MCF 10A (cell line): ENCODE measurements at regions of chr12 and their contacts with region 1.

Region 1: GRCh38 chr12:14769969-14770495 is 33.2 kb downstream of the WBP11 start:
- DNase-seq: peak; percentile 81
- H3K4me3 Mint-ChIP-seq: peak overlapping the region; percentile 98
- H3K27ac Mint-ChIP-seq: peak overlapping the region; percentile 98
- H3K4me1 Mint-ChIP-seq: peaks cover 11% of the 10 kb centered on the region
- H3K27me3 Mint-ChIP-seq: no peaks in the 10 kb centered on the region
- CTCF ChIP-seq: peak; percentile 62

Region 2: GRCh38 chr12:14403711-14404196 is 366.3 kb before region 1 on chr12:
- CTCF ChIA-PET with region 1: no interaction called
- POLR2A ChIA-PET with region 1: interaction called, 3 read pairs
- intact Hi-C with region 1: loop called (anchors 10 kb)
- DNase-seq: peak; percentile 69
- H3K4me3 Mint-ChIP-seq: peak overlapping the region; percentile 28
- H3K27ac Mint-ChIP-seq: peak overlapping the region; percentile 91
- H3K4me1 Mint-ChIP-seq: peaks cover 27% of the 10 kb centered on the region
- H3K27me3 Mint-ChIP-seq: no peaks in the 10 kb centered on the region
- CTCF ChIP-seq: no peak

Region 3: GRCh38 chr12:14521822-14522221 is 248.2 kb before region 1 on chr12:
- CTCF ChIA-PET with region 1: no interaction called
- POLR2A ChIA-PET with region 1: no interaction called
- intact Hi-C with region 1: no loop called
- DNase-seq: no peak
- H3K4me3 Mint-ChIP-seq: no peak overlapping the region
- H3K27ac Mint-ChIP-seq: no peak overlapping the region
- H3K4me1 Mint-ChIP-seq: no peaks in the 10 kb centered on the region
- H3K27me3 Mint-ChIP-seq: no peaks in the 10 kb centered on the region
- CTCF ChIP-seq: no peak

Region 4: DNA sequence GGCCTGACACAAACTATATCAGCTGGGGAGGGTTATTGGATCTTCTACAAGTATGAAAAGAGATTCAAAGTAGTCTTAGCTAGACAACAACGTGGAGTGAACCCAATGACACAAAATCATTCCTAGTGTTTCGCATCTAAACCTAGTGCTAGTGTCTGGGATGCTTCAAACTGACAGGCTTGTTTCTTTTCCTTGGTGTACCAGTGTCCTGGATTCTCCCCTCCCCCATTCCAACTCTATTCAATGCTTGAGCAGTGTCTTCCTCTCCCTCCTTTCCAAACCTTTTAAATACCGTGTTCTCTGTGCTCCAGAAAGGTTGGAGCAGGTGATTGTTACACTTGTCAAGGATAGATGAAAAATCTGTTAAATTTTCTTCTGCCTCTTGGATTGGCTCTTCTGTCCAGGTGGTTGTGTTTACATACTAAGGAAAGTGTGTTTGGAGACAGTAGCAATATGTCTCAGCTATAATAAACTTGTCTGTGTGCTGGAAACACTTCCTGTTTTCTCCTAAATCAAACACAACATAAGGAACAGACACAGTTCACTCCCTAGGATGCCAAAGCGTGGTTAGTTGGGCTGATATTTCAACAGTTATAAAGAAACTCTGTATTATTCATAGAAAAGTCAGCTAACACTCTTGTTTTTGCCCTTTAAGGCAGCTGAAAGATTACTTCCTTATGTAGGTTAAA is 59.3 kb before region 1 on chr12:
- CTCF ChIA-PET with region 1: no interaction called
- POLR2A ChIA-PET with region 1: no interaction called
- intact Hi-C with region 1: no loop called
- DNase-seq: no peak
- H3K4me3 Mint-ChIP-seq: no peak overlapping the region
- H3K27ac Mint-ChIP-seq: no peak overlapping the region
- H3K4me1 Mint-ChIP-seq: no peaks in the 10 kb centered on the region
- H3K27me3 Mint-ChIP-seq: no peaks in the 10 kb centered on the region
- CTCF ChIP-seq: no peak

Region 5: GRCh38 chr12:14782756-14783155 is 12.7 kb after region 1 on chr12:
- CTCF ChIA-PET with region 1: interaction called, 7 read pairs
- POLR2A ChIA-PET with region 1: interaction called, 25 read pairs
- intact Hi-C with region 1: no loop called
- DNase-seq: no peak
- H3K4me3 Mint-ChIP-seq: no peak overlapping the region
- H3K27ac Mint-ChIP-seq: no peak overlapping the region
- H3K4me1 Mint-ChIP-seq: no peaks in the 10 kb centered on the region
- H3K27me3 Mint-ChIP-seq: no peaks in the 10 kb centered on the region
- CTCF ChIP-seq: no peak

Region 6: GRCh38 chr12:14810953-14811483 is 41.0 kb after region 1 on chr12:
- CTCF ChIA-PET with region 1: interaction called, 7 read pairs
- POLR2A ChIA-PET with region 1: interaction called, 285 read pairs
- intact Hi-C with region 1: no loop called
- DNase-seq: peak; percentile 64
- H3K4me3 Mint-ChIP-seq: no peak overlapping the region
- H3K27ac Mint-ChIP-seq: no peak overlapping the region
- H3K4me1 Mint-ChIP-seq: peaks cover 6% of the 10 kb centered on the region
- H3K27me3 Mint-ChIP-seq: no peaks in the 10 kb centered on the region
- CTCF ChIP-seq: peak; percentile 65

Region 7: DNA sequence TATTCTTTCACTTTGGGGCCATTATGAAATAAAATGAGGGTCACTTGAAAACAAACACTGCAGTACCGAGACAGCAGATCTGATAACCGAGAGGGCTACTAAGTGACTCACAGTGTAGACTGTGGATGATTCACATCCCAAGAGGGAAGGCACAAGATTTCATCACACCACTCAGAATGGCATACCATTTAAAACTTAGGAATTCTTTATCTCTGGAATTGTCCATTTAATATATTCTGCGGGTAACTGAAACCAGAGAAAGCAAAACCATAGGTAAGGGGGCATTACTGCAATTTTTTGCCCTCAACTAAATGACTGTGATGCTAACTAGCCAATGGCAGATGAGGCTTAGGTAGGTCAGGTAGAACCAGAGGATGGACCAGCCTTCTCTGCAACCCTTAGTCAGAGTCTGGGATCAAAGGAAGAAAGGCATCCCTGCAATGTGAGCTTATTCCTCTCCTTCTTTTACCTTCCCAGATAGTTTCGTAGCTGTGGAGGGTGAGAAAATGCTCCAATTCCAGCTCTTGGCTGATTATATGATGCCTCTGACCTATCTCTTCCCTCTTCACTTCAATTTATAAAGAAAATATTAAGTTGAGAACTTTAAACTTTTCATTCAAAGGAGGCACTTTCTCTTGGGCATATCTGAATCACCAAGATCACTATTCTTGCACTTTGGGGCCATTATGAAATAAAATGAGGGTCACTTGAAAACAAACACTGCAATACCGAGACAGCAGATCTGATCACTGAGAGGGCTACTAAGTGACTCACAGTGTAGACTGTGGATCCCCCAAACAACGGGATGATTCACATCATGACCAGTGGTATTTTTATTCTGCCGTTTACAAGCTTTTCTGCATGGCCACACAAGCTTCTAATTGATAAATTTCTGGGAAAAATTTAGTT is 66.5 kb after region 1 on chr12:
- CTCF ChIA-PET with region 1: interaction called, 9 read pairs
- POLR2A ChIA-PET with region 1: interaction called, 13 read pairs
- intact Hi-C with region 1: loop called (anchors 10 kb)
- DNase-seq: peak; percentile 88
- H3K4me3 Mint-ChIP-seq: peak overlapping the region; percentile 65
- H3K27ac Mint-ChIP-seq: peak overlapping the region; percentile 89
- H3K4me1 Mint-ChIP-seq: peaks cover 39% of the 10 kb centered on the region
- H3K27me3 Mint-ChIP-seq: no peaks in the 10 kb centered on the region
- CTCF ChIP-seq: no peak

Region 8: DNA sequence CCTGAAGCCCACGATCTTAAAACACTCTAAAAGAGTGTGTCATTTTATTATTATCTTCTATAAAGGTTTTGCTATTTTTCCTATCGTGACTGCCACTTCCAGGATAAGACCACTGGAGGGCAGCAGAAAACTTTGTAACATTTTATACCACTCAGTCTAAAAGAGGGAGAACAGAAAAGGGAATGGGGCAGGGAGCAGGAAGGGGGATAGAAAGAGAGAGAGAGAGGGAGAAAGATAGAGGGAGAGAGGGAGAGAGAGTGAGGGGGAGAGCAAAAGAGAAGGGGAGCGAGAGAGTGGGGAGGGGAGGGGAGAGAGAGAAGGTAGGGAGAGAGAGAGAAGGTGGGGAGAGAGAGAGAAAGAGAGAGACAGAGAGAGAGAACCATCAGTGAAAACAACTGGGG is 75.3 kb after region 1 on chr12:
- CTCF ChIA-PET with region 1: no interaction called
- POLR2A ChIA-PET with region 1: no interaction called
- intact Hi-C with region 1: loop called (anchors 10 kb)
- DNase-seq: peak; percentile 74
- H3K4me3 Mint-ChIP-seq: no peak overlapping the region
- H3K27ac Mint-ChIP-seq: peak overlapping the region; percentile 78
- H3K4me1 Mint-ChIP-seq: peaks cover 23% of the 10 kb centered on the region
- H3K27me3 Mint-ChIP-seq: no peaks in the 10 kb centered on the region
- CTCF ChIP-seq: peak; percentile 68

Region 9: GRCh38 chr12:14913381-14913781 is 143.3 kb after region 1 on chr12:
- CTCF ChIA-PET with region 1: no interaction called
- POLR2A ChIA-PET with region 1: no interaction called
- intact Hi-C with region 1: no loop called
- DNase-seq: peak; percentile 43
- H3K4me3 Mint-ChIP-seq: no peak overlapping the region
- H3K27ac Mint-ChIP-seq: no peak overlapping the region
- H3K4me1 Mint-ChIP-seq: peaks cover 19% of the 10 kb centered on the region
- H3K27me3 Mint-ChIP-seq: no peaks in the 10 kb centered on the region
- CTCF ChIP-seq: no peak